Left cardiac atrium (tissue), 4 donors: ENCODE measurements at regions of chr12 and their contacts with region 1.

Region 1: GRCh38 chr12:112382232-112382796 is at the start of gene HECTD4:
- DNase-seq: peak; percentile 99
- ATAC-seq: peak; percentile 99
- total RNA-seq, gene HECTD4: 22.2 to 24.4 TPM

Region 2: DNA sequence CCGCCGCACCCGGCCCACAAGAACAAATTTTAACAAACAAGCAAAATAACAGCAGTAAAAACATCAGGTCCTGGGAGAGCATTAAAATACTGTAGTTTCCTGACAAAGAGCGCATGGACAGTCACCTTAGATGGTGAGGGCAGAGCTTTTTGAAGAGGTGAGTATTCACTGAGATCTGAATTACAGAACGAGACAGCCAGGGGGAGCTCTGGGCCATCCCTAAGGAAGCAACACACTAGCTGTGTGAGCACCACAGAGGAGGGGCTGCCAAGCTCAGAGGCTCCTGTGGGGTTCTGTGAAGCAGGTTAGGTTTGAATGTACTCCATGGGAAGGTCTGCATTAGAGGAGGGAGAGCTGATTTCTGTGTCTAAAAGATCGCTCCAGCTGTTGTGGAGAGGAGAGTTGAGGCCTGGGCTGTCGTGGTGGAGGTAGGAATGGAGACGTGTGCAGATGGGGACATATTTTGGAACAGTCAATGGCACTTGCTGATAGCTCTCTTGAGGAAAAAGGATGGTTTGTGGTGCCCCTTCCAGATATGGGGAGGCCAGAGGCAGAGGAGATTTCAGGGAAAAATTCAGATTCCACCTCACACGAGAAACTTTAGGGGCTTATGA is 184.1 kb before region 1 on chr12:
- intact Hi-C with region 1: loop called (anchors 5 to 10 kb)
- DNase-seq: peak; percentile 42
- ATAC-seq: peak; percentile 76 to 84

Region 3: GRCh38 chr12:112266473-112266872 is 115.8 kb before region 1 on chr12:
- intact Hi-C with region 1: loop called in 1 of 2 experiments (anchors 5 kb)
- DNase-seq: no peak
- ATAC-seq: no peak

Region 4: GRCh38 chr12:112294793-112295192 is 87.5 kb before region 1 on chr12:
- intact Hi-C with region 1: loop called in 1 of 2 experiments (anchors 10 kb)
- DNase-seq: no peak
- ATAC-seq: no peak

Region 5: DNA sequence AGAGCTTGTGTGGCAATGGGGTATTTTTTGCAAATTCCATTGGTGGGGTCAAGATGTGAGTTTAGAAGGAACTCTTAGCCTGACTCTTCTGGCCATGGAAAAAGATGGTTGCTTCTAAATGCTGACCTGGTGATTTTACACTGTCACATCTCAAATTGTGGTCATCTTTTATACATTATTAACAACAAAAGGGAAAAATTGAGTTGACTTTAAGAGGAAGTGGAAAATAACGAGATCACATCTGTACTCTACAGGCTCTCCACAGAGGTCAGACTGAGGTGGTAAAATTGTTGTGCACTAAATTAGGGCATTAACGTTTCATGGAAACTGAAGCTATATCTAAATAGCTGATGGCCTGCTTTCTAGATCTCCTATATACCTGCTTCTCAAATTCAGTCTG is 81.2 kb after region 1 on chr12:
- intact Hi-C with region 1: no loop called
- DNase-seq: no peak
- ATAC-seq: no peak

Region 6: GRCh38 chr12:113075137-113075683 is 692.9 kb after region 1 on chr12:
- intact Hi-C with region 1: no loop called
- DNase-seq: no peak
- ATAC-seq: no peak